Activated CD4-positive, alpha-beta memory T cell treated with anti-CD3 and anti-CD28 coated beads for 36 hours (primary cell): ENCODE measurements at regions of chr9 and their contacts with region 1.

Region 1: DNA sequence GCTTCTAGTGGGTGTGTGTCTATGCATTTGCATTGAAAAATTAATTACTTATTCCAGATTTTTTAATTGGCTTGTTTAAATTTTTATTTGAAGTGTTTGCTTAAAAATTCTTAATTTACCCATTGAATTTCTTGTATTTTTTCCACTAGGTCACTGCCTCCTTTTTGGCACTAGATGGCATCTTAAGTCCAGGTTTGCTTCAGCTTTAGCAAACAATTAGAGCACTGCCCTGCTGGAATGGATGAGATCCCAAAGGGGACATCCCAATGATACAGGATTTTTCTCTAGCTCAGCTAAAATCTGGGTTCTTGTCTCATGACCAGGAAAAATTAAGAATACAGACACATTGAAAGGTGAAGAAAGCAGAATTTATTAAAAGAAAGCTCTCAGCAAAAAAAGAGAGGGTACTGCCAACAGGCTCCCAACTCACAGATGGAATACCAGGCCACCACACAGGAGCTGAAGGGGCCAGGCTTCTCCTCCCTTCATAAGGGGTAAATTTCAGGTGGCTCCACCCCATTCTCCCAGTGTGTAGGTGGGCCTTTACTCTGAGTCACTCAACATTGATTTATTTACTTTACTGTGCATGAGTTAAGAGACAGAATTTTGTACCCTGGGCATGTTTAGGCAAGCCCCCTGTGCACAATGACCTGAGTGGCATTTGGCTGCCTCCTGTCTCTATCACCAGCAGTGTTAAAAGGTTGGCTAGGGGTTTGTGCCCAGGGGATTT is 532.4 kb downstream of the ANXA1 start:
- DNase-seq: no peak
- H3K4me3 Mint-ChIP-seq: no peak overlapping the region
- H3K27ac Mint-ChIP-seq: no peak overlapping the region
- H3K4me1 Mint-ChIP-seq: no peaks in the 10 kb centered on the region
- H3K27me3 Mint-ChIP-seq: no peaks in the 10 kb centered on the region

Region 2: DNA sequence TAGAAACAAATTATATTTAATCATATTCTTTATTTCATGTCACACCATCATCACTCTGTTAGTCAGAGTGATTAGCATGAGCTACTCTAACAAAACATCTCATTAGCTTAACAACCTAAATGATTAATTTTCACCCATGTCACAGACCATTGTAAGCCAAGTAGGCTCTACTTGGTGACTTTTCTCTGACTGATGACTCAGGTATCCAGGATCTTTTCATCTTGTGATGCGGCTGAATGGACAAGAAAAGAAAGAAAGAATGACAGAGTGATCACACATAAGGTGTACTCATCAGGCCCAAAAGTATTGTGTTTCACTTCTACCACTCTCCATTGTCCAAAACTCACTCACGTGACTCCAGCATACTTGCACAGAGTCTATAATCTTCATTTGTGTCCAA is 233.0 kb before region 1 on chr9:
- CTCF ChIA-PET with region 1: no interaction called
- POLR2A ChIA-PET with region 1: no interaction called
- intact Hi-C with region 1: no loop called
- DNase-seq: no peak
- H3K4me3 Mint-ChIP-seq: no peak overlapping the region
- H3K27ac Mint-ChIP-seq: no peak overlapping the region
- H3K4me1 Mint-ChIP-seq: no peaks in the 10 kb centered on the region
- H3K27me3 Mint-ChIP-seq: no peaks in the 10 kb centered on the region

Region 3: DNA sequence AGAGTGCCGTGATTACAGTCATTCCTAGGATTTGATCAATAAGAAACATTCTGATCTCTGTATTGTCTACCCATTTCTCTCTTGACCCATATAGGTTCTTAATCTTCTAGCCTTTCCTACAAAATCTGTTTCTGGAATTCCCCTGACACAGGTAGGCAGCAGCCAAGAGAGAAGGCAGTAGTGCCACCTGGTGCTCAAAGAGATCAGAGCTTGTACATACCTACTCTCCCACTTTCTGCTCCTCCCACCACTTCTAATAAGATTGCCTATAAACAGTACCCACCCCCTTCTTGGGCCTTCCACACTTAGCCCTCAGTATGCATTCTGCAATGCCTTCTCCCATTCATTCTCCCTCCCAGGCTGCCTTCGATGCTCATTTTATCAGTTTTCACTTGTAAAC is 695.7 kb after region 1 on chr9:
- CTCF ChIA-PET with region 1: no interaction called
- POLR2A ChIA-PET with region 1: no interaction called
- intact Hi-C with region 1: loop called (anchors 10 kb)
- DNase-seq: peak; percentile 31
- H3K4me3 Mint-ChIP-seq: no peak overlapping the region
- H3K27ac Mint-ChIP-seq: no peak overlapping the region
- H3K4me1 Mint-ChIP-seq: no peaks in the 10 kb centered on the region
- H3K27me3 Mint-ChIP-seq: no peaks in the 10 kb centered on the region

Region 4: GRCh38 chr9:74570879-74571512 is 887.0 kb after region 1 on chr9:
- CTCF ChIA-PET with region 1: interaction called, 4 read pairs
- POLR2A ChIA-PET with region 1: no interaction called
- intact Hi-C with region 1: loop called (anchors 5 kb)
- DNase-seq: peak; percentile 19
- H3K4me3 Mint-ChIP-seq: no peak overlapping the region
- H3K27ac Mint-ChIP-seq: no peak overlapping the region
- H3K4me1 Mint-ChIP-seq: no peaks in the 10 kb centered on the region
- H3K27me3 Mint-ChIP-seq: peaks cover 2% of the 10 kb centered on the region